ENCODE measurements at regions of chrX and their contacts with region 1.

Region 1: DNA sequence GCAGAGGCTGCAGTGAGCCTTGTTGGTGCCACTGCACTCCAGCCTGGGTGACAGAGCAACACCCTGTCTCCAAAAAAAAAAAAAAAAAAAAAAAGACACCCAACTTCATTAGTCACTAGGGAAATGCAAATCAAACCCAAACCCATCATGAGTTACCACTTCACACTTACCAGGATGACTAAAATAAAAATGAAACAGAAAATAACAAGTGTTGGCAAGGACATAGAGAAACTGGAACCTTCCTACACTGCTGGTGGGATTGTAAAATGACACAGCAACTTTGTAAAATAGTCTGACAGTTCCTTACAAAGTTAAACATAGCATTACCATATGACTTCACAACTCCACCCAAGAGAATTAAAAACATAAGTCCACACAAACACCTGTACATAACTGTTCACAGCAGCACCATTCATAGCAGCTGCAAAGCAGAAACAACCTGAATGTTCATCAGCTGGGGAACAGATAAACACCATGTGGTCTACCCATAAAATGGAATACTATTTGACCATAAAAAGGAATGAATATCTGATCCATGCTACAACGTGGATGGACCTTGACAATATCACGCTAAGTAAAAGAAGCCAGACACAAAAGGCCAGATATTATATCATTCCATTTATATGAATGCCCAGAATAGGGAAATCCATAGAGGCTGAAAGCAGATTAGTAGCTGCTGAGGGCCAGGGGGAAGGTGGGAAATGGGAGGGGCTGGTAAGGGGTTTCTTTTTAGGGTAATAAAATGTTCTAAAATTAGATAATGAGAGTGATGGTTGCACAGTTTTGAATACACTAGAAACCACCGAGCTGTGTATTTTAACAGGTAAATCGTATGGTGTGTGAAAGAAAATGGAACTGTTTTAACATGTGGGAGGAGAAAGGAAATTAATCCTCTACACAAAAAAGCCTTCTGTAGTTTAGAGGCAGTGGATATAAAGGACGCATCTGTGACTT is 18.3 kb downstream of the CD99L2 start:
- DNase-seq: no peak
- H3K4me3 Mint-ChIP-seq: no peak overlapping the region
- H3K27ac Mint-ChIP-seq: peak overlapping the region; percentile 82
- H3K4me1 Mint-ChIP-seq: peaks cover 34% of the 10 kb centered on the region
- H3K27me3 Mint-ChIP-seq: no peaks in the 10 kb centered on the region

Region 2: GRCh38 chrX:150752124-150752523 is 128.0 kb before region 1 on chrX:
- CTCF ChIA-PET with region 1: no interaction called
- POLR2A ChIA-PET with region 1: no interaction called
- intact Hi-C with region 1: no loop called
- DNase-seq: no peak
- H3K4me3 Mint-ChIP-seq: no peak overlapping the region
- H3K27ac Mint-ChIP-seq: no peak overlapping the region
- H3K4me1 Mint-ChIP-seq: no peaks in the 10 kb centered on the region
- H3K27me3 Mint-ChIP-seq: no peaks in the 10 kb centered on the region

Region 3: GRCh38 chrX:150813922-150814321 is 66.2 kb before region 1 on chrX:
- CTCF ChIA-PET with region 1: no interaction called
- POLR2A ChIA-PET with region 1: no interaction called
- intact Hi-C with region 1: loop called (anchors 5 kb)
- DNase-seq: peak; percentile 8
- H3K4me3 Mint-ChIP-seq: no peak overlapping the region
- H3K27ac Mint-ChIP-seq: peak overlapping the region; percentile 38
- H3K4me1 Mint-ChIP-seq: peaks cover 10% of the 10 kb centered on the region
- H3K27me3 Mint-ChIP-seq: no peaks in the 10 kb centered on the region

Region 4: DNA sequence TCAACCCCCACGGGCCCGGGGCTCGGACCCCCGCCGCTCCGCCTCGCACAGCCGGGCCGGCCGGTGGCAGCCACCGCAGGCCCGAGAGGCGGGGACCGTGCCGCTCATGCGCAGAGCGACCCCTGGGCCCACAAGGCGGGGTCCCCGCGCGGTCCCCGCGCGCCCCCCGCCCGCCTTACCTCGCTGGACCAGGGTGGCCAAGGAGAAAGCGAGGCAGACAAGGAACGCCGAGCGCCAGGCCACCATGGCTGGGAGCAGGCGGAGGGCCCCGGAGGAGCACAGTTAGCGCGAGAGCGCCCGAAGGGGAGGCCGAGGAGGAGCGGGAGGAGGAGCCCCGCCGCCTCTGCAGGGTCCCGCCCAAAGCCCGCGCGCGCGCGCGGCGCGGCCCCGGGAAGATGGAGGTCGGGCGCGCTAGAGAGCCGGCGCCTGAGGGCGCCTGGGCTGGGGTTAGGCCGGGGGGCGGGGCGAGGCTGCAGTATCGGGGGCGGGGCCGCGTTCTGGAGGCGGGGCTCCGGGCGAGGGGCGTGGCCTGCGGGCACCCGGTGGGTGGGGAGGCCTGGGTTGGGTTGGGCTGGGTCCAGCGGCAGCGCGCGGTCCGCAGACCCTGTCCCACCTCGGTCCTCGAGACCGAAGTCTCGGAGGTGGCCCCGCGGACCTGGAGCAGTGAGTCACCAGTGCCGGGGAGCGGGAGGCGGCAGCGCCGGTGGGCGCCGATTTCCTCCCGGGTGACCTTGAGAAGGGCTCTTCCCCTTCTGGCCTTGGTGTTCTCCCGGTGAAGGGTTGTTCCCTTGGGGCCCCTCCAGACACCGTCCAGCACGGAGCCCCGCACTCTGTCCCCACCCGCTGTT is 18.4 kb after region 1 on chrX and contains the start of gene CD99L2:
- CTCF ChIA-PET with region 1: no interaction called
- POLR2A ChIA-PET with region 1: interaction called, 3 read pairs
- intact Hi-C with region 1: loop called (anchors 2 kb)
- DNase-seq: peak; percentile 93
- H3K4me3 Mint-ChIP-seq: peak within 1 kb of the TSS; percentile 77
- H3K27ac Mint-ChIP-seq: peak within 1 kb of the TSS; percentile 49
- H3K4me1 Mint-ChIP-seq: peaks cover 13% of the 10 kb centered on the region
- H3K27me3 Mint-ChIP-seq: no peaks in the 10 kb centered on the region
- total RNA-seq, gene CD99L2: 14.9 to 15.7 TPM

Region 5: DNA sequence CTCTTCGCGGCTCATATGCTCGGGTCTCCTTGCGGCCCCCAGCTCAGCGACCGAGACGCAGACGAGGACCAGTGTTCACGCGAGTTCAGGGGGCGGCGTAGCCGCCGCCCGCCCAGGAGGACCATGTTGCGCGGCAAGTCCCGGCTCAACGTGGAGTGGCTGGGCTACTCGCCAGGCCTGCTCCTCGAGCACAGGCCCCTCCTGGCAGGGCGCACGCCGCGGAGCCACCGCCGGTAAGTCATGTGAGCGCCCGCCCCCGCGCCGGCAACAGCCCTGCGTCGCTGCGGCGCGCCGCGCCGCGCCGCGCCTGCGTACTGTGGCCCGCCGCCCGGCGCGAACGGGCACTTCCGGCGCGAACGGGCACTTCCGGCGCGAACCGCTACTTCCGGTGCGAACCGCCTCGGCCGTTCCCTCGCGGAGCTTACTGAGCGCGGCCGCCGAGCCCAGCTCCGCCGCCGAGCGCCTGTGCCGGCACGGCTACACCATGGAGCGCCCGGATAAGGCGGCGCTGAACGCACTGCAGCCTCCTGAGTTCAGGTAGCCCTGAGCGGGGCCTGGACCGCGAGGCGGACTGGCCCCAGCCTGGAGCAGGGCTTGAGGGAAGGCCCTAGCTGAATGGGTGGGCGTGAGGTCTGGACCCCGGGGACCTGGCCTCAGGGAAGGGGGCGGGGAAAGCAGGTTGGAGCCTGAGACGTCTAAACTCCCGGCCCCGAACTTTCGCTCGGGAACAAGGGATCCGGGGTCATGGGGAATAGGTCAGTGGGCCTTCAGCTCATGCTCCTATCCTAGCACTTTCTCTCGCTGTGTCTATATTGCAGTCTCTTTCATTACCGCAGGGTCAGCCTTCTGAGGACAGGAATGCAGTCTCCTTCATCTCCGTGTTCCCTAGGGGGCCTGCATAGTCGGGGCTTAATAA is 517.0 kb after region 1 on chrX and contains the start of gene VMA21:
- CTCF ChIA-PET with region 1: no interaction called
- POLR2A ChIA-PET with region 1: no interaction called
- intact Hi-C with region 1: loop called (anchors 5 kb)
- DNase-seq: peak; percentile 89
- H3K4me3 Mint-ChIP-seq: peak within 1 kb of the TSS; percentile 89
- H3K27ac Mint-ChIP-seq: peak within 1 kb of the TSS; percentile 96
- H3K4me1 Mint-ChIP-seq: peaks cover 45% of the 10 kb centered on the region
- H3K27me3 Mint-ChIP-seq: no peaks in the 10 kb centered on the region
- total RNA-seq, gene VMA21: 39.9 to 43.6 TPM